ENCODE measurements at regions of chr10 and their contacts with region 1.

Region 1: DNA sequence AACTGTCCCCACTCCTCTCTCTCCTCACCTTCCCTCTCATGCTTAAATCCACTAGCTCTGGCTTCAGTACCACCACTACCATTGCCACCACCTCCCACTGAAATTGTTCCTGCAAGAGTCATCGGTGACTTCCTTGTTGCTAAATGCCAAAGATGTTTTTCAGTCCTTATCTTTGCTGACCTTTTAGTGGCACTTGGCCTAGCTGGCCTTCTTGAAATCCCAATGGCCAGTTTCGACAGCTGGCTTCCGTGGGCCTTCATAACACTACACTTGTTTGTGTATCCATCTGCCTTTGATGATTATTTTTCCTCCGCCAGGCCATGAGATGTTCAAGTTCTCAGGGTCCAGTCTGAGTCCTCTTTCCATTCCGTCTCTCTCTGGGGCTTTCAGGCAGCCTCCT is 118.2 kb upstream of the NANOS1 start:
- DNase-seq: no peak
- ATAC-seq: peak in 2 of 8 donors; percentile 16 to 63
- H3K4me3 ChIP-seq: no peak overlapping the region
- H3K27ac ChIP-seq: peak overlapping the region in 1 of 10 donors; percentile 15
- H3K4me1 ChIP-seq: peaks cover 0 to 31% (median 14%) of the 10 kb centered on the region in 9 donors
- H3K27me3 ChIP-seq: no peaks in the 10 kb centered on the region
- CTCF ChIP-seq: no peak

Region 2: DNA sequence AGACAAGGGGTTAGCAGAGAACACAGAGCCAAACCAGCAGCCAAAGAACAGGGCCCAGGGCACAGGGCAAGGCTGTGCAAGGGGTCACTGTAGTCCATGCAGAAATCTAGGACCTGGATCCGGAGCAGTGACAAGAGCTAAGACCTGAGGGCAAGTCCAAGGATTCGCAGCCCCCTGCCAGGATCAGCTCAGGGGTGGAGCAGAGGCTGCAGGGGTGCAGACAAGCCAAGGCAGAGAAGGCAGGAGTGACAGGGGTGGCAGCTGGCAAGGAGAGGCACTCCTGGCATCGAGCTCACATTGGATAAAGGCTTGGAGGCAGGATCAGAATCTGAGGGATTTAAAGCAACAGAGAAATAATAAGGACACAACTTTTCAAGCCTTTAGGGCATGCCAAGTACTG is 37.4 kb after region 1 on chr10:
- intact Hi-C with region 1: loop called in 1 of 10 experiments (anchors 5 kb)
- DNase-seq: peak in 1 of 2 donors; percentile 37
- ATAC-seq: peak in 6 of 8 donors; percentile 52 to 81 (median 72)
- H3K4me3 ChIP-seq: no peak overlapping the region
- H3K27ac ChIP-seq: no peak overlapping the region
- H3K4me1 ChIP-seq: peaks cover 0 to 23% (median 13%) of the 10 kb centered on the region in 9 donors
- H3K27me3 ChIP-seq: no peaks in the 10 kb centered on the region
- CTCF ChIP-seq: no peak

Region 3: DNA sequence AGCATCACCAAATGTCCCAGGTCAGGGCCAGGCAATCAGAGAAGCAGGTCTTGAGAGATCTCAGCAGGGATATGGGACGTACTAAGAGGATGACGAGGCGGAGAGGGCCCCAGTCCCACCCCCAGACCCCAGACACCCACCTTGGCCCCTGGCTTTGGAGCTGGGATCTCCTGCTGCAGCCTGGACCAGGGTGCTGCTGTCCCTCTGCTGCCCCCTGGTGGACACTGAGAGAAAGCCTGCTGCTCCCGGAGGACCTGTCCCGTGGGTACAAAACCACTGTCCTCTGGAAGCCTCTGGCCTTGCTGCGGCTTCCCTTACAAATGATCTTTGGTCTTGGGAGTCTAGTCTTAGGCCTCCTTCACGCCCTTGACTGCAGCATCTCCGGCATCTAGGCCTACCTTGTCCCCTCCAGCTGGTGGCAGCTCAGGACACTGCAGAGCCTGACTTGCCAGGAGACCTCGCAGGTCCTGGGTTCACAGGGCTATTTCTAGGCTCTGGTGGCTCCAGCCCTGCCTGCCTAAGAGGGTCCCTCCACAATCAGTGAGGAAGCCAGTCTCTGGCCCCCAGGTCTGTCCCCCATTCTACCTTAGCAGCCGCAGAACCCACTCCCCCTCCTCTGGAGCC is 534.1 kb after region 1 on chr10:
- intact Hi-C with region 1: no loop called
- DNase-seq: peak; percentile 85 to 88
- ATAC-seq: peak; percentile 46 to 79 (median 68)
- H3K4me3 ChIP-seq: no peak overlapping the region
- H3K27ac ChIP-seq: peak overlapping the region in 6 of 10 donors; percentile 42 to 68 (median 50)
- H3K4me1 ChIP-seq: peaks cover 11 to 60% (median 32%) of the 10 kb centered on the region in 9 donors
- H3K27me3 ChIP-seq: no peaks in the 10 kb centered on the region
- CTCF ChIP-seq: peak; percentile 95 to 98 (median 97)

Measured in heart right ventricle (tissue), 16 donors.